Right ventricle myocardium superior (tissue), 1 donor: ENCODE measurements at regions of chr10 and their contacts with region 1.

Region 1: DNA sequence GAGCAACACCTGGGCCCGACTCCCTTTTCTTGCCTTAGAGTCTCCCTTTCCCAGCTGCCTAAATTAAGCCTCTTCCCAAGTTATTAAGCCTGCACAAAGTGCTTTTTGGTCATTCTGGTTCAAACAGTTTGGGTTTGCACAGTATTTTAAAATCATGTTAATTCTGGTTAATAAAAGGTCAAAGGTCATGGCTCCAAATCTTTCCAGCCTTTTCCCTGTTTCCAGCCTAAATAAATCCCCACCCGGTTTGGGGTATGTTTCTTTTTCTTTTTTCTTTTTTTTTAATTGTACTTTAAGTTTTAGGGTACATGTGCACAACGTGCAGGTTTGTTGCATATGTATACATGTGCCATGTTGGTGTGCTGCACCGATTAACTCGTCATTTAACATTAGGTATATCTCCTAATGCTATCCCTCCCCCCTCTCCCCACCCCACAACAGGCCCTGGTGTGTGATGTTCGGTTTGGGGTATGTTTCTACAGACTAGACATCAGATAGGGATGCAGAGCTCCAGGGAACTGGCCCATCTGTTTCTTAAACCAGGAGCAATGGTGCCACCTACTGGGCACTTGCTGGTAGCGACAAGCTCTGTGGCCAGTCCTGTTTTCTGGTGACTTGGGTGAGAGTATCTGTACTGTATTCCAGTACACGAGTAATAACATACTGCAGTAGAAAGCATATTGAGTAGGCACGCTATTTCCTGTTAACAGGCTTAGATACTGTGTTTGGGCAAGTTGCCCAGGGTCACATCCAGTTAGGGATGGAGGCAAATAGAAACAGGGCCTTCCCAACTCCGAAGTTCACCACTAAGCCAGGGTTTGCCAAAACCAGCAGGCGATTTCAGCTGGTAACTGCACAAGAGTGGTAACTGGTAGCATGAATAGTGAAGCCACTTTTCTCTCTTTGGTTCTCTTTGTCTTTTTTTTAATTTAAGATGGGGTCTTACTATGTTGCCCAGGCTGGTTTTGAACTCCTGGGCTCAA is 60.6 kb upstream of the TRIM8 start:
- DNase-seq: peak; percentile 89
- ATAC-seq: peak; percentile 96

Region 2: DNA sequence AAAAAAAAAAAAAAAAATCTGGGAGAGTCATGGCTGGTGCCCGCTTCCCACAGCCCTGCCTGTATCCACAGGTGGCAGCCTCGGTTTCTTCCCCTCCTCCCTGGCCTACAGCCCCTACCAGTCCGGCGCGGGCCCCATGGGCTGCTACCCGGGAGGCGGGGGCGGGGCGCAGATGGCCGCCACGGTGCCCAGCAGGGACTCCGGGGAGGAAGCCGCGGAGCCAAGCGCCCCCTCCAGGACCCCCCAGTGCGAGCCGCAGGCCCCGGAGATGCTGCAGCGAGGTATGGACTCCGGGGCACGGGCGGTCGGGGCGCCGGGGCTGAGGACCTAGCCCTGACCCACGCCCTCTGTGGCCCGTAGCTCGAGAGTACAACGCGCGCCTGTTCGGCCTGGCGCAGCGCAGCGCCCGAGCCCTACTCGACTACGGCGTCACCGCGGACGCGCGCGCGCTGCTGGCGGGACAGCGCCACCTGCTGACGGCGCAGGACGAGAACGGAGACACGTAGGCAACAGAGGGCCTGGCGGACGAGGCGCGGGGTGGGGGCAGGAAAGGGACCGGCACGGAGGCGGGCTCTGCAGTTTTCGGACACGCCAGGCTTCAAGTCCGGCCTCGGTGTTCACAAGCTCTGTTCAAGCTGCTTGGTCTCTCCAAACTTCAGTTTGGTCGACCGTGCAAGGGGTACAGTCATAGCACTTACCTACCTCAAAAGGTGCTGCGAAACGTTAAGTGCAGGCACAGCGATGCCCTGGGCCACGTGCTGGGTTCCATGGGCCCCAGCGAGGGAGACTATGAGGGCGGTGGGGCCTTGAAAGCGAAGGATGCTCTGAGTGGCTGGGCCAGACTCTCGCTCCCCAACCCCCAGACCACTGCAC is 184.3 kb before region 1 on chr10:
- intact Hi-C with region 1: loop called (anchors 5 kb)
- DNase-seq: peak; percentile 96
- ATAC-seq: peak; percentile 82

Region 3: GRCh38 chr10:102509387-102509786 is 74.3 kb before region 1 on chr10:
- intact Hi-C with region 1: loop called (anchors 5 kb)
- DNase-seq: no peak
- ATAC-seq: no peak

Region 4: GRCh38 chr10:102669206-102670064 is 85.7 kb after region 1 on chr10:
- intact Hi-C with region 1: no loop called
- DNase-seq: peak; percentile 75
- ATAC-seq: peak; percentile 75

Region 5: DNA sequence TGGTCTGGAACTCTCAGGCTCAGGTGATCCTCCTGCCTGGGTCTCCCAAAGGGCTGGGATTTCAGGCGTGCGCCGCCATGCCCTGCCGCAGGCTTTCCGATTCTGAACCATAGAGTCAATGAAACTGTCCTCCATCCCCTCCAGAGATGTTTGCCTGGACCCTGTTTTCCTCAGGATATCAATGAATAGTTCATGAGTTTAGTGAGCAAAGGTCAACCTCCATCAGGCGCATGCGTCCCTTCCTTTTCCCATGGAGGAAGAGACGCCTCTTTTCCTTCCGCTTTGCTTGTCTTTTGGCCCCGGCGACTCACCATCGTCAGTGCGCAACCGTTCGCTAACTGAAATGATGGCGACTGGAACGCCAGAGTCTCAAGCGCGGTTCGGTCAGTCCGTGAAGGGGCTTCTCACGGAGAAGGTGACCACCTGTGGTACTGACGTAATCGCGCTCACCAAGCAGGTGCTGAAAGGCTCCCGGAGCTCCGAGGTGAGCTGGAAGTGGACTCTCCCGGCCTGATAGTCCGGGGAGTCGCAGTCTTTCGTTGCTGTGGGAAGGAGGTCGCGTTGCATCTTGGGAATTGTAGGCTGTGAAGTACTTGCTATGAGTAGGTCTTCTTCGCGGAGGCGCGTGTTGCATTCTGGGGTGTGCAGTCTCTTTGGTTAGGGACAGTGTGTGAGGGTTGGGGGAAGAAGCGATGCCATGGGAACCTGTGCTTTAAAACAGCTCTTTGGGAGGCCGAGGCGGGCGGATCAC is 270.4 kb after region 1 on chr10 and contains the start of gene BORCS7:
- intact Hi-C with region 1: no loop called
- DNase-seq: peak; percentile 92
- ATAC-seq: peak; percentile 100
- total RNA-seq, gene BORCS7: 11.1 TPM